Heart left ventricle (tissue), 16 donors: ENCODE measurements at regions of chr14 and their contacts with region 1.

Region 1: DNA sequence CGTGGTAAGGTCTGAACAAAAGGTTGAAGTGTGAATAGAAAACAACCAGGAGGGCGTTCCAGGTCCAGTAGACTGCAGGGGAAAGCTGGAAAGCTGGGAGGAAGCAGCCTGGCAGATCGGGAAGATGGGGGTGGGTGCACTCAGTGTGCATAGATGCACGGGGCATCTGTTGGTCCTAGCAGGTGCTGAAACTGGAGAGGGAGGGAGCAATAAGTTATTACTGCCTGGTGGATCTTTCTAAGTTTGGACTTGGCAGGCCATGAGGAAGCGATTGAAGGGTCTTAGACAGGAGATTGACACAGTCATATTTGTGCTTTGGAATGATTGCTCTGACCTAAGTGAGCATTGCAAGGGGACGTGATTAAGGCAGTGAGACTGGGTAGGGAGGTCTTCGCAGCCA is 194.4 kb downstream of the EFCAB11 start:
- DNase-seq: no peak
- ATAC-seq: no peak
- H3K4me3 ChIP-seq: no peak overlapping the region
- H3K27ac ChIP-seq: no peak overlapping the region
- H3K4me1 ChIP-seq: no peaks in the 10 kb centered on the region
- H3K27me3 ChIP-seq: no peaks in the 10 kb centered on the region
- CTCF ChIP-seq: no peak
- POLR2A ChIP-seq: no peak

Region 2: GRCh38 chr14:89033756-89034155 is 726.3 kb before region 1 on chr14:
- intact Hi-C with region 1: loop called in 3 of 10 experiments (anchors 5 to 10 kb)
- DNase-seq: no peak
- ATAC-seq: no peak
- H3K4me3 ChIP-seq: no peak overlapping the region
- H3K27ac ChIP-seq: no peak overlapping the region
- H3K4me1 ChIP-seq: no peaks in the 10 kb centered on the region
- H3K27me3 ChIP-seq: peaks cover 0 to 21% (median 0%) of the 10 kb centered on the region in 9 donors
- CTCF ChIP-seq: no peak
- POLR2A ChIP-seq: no peak

Region 3: GRCh38 chr14:89430391-89431236 is 329.5 kb before region 1 on chr14:
- intact Hi-C with region 1: loop called in 2 of 10 experiments (anchors 5 to 10 kb)
- DNase-seq: no peak
- ATAC-seq: peak in 3 of 4 donors; percentile 25 to 53 (median 38)
- H3K4me3 ChIP-seq: peak overlapping the region in 11 of 12 donors; percentile 2 to 54 (median 37)
- H3K27ac ChIP-seq: peak overlapping the region; percentile 28 to 93 (median 64)
- H3K4me1 ChIP-seq: peaks cover 8 to 46% (median 36%) of the 10 kb centered on the region in 12 donors
- H3K27me3 ChIP-seq: no peaks in the 10 kb centered on the region
- CTCF ChIP-seq: no peak
- POLR2A ChIP-seq: no peak

Region 4: DNA sequence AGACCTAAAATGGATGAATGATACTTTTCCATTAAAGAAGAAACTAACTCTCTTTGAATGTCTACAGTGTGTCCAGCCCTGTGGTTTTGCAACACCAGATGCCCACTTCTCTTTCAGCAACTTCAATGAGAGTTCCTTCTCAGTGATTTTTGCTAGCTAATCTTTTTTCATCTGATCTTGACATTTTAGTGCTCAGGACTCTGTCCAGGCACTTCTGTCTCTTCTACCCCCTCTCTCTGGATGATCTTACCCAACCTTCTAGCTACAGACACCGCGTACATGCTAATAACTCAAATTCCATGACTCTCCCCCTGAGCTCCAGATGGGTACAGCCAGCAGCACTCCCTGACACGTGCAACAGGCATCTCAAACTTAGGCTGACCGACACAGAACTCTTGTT is 181.9 kb before region 1 on chr14:
- intact Hi-C with region 1: no loop called
- DNase-seq: no peak
- ATAC-seq: peak in 3 of 4 donors; percentile 31 to 82 (median 57)
- H3K4me3 ChIP-seq: no peak overlapping the region
- H3K27ac ChIP-seq: peak overlapping the region in 1 of 12 donors; percentile 66
- H3K4me1 ChIP-seq: peaks cover 0 to 49% (median 25%) of the 10 kb centered on the region in 12 donors
- H3K27me3 ChIP-seq: no peaks in the 10 kb centered on the region
- CTCF ChIP-seq: no peak
- POLR2A ChIP-seq: no peak